ENCODE measurements at regions of chr12 and their contacts with region 1.

Region 1: GRCh38 chr12:93434256-93434865 is 7.4 kb downstream of the UBE2N start:
- DNase-seq: no peak
- H3K4me3 Mint-ChIP-seq: no peak overlapping the region
- H3K27ac Mint-ChIP-seq: no peak overlapping the region
- H3K4me1 Mint-ChIP-seq: peaks cover 63% of the 10 kb centered on the region
- H3K27me3 Mint-ChIP-seq: peaks cover 2% of the 10 kb centered on the region

Region 2: DNA sequence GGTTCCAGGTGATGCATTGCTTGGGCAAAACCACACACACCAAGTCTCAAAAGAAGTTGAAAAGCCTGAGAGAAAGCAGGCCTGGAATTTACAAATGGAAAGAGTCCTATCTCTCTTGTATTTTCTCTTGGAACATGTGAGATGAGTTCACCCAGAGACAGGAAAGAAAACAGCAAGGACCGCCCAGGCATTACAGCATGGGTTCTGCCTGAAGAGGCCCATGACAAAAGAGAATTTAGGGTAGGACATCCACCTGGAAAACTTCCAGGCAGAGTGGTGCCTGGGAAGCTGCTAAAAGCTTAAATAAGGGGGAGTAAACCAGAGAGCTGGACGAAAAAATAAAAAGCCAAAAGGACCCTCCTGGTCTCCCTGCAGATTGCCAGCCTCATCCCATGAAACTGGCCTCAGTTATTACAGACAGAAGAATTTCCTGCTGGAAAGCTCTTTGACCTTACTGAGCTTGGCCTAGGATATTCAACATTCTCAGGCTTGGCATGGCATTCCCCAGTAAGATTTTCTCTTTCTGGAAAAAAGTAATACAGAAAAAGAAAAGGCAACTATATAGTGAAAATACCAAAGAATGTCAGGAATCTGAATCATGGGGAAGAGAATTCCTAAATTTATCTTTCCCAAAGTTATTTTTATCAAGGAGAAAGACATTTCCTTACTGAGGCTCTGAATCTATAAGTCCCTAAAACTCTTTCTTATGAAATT is 177.9 kb before region 1 on chr12:
- intact Hi-C with region 1: no loop called
- DNase-seq: no peak
- H3K4me3 Mint-ChIP-seq: no peak overlapping the region
- H3K27ac Mint-ChIP-seq: no peak overlapping the region
- H3K4me1 Mint-ChIP-seq: no peaks in the 10 kb centered on the region
- H3K27me3 Mint-ChIP-seq: no peaks in the 10 kb centered on the region

Region 3: DNA sequence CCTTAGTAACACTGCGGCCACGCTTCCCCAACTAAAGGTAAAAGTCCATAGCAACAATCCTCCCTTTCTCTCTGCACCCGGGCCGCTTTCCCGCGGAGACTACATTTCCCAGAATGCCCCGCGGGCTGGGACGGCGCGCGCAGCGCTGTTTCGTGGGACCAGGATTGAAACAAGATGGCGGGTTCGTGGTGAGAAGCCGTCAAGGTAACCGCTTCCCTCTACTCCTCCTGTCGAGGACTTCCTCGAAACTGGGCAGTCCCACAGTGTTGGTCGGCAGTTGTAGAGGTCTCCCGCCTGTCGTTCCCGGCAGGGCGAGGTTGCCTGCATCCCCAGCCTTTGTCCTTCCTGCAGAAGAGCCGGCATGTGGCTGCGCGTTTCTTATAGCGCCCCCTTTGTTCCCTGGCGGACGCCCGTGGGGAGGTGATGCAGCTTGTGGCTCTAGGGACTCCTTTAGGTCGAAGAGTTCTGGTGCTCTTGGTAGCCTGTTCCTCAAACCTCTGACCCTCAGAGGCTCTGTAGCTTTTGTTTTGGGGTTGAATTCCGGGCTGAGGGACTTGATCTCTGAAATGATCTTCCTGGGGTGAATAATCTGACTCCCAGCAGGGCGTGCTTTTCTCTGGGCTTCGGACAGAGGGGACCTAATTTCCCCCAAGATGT is 33.1 kb after region 1 on chr12 and contains the start of gene MRPL42:
- intact Hi-C with region 1: loop called (anchors 5 kb)
- DNase-seq: peak; percentile 90
- H3K4me3 Mint-ChIP-seq: peak within 1 kb of the TSS; percentile 96
- H3K27ac Mint-ChIP-seq: peak within 1 kb of the TSS; percentile 93
- H3K4me1 Mint-ChIP-seq: peaks cover 43% of the 10 kb centered on the region
- H3K27me3 Mint-ChIP-seq: no peaks in the 10 kb centered on the region
- total RNA-seq, gene MRPL42: 83.2 and 87.0 TPM in 2 replicates

Region 4: GRCh38 chr12:93494096-93494495 is 59.7 kb after region 1 on chr12:
- intact Hi-C with region 1: no loop called
- DNase-seq: no peak
- H3K4me3 Mint-ChIP-seq: no peak overlapping the region
- H3K27ac Mint-ChIP-seq: no peak overlapping the region
- H3K4me1 Mint-ChIP-seq: peaks cover 9% of the 10 kb centered on the region
- H3K27me3 Mint-ChIP-seq: no peaks in the 10 kb centered on the region

Measured in activated T-helper 1 cell treated with anti-CD3 and anti-CD28 coated beads, Interleukin-12 subunit alpha, Interleukin-12 subunit beta, Interleukin-2, Interleukin-4 antibody, amounts not matched to agents 30 ng/mL and 10 ng/mL and 1 ng/mL, durations not matched to agents 14 hours and 24 hours and 36 hours (primary cell).